Pancreas (tissue), 10 donors: ENCODE measurements at regions of chr19 and their contacts with region 1.

Region 1: DNA sequence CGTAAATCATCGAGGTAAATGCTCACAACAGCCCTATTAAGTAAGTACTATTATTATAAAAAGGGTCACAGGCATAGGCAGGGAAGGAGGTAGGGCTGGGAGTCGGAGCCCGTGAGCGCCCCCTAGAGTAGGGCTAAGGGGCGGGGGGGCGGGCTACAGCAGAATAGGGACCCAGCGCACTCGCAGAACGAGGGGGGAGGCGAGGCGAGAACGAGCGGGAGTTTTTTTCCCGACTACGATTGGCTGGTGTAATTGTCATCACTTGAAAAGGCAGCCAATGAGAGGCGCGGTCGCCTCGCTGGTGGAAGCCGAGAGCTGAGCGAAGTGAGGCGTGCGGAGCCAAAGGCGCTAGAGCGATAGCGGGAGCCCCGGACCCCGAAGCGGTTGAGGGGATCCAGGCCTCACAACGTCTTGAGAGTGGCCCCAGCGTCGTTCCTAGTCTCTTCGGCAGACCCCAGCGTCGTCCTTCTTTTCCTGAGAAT is 24.2 kb downstream of the KEAP1 start:
- DNase-seq: peak; percentile 91 to 93 (median 92)
- ATAC-seq: peak; percentile 91 to 95 (median 94)
- H3K4me3 ChIP-seq: peak overlapping the region in 2 of 4 donors; percentile 30 to 43
- H3K27ac ChIP-seq: no peak overlapping the region
- H3K4me1 ChIP-seq: no peaks in the 10 kb centered on the region
- H3K27me3 ChIP-seq: no peaks in the 10 kb centered on the region
- CTCF ChIP-seq: peak; percentile 65 to 75 (median 74)

Region 2: DNA sequence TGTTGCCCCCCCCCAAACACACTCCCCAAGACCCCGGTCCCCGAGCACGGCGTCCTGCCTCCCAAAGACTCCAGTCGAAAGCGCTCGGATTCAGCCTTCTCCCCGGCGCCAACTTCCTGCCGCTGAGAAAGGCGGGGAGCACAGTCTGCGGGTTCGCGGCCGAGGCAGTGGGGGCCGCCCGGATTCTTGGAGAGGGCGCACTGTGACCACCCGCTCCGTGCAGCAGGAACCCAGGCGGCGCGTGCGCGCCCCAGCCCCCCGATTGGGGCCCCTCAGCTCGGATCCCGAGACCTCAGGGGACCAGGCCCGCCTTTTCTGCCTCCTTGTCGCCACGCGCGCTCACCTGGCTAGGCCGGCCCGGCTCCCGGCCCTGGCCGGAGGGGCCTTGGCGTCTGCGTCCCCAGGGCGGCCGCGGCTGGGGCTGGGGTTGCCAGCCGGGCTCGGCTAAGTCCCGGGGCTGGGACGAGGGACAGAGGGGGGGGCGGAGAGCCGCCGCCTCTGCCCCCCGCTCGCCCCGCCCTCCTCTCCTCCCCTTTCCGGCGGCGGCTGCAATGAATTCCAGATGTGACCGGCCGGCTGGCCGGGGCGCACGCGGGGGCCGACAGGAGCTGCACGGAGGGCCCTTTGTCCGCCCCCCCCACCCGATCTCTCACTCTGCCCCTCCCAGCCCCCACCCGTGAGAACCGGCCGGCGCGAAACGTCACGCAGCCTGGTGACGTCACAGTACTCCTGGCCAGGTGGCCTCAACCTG is 247.9 kb before region 1 on chr19 and contains the start of gene S1PR2:
- intact Hi-C with region 1: no loop called
- DNase-seq: peak; percentile 65 to 84 (median 76)
- ATAC-seq: peak; percentile 87 to 89 (median 88)
- H3K4me3 ChIP-seq: peak within 1 kb of the TSS; percentile 82 to 95 (median 88)
- H3K27ac ChIP-seq: peak within 1 kb of the TSS; percentile 49 to 69 (median 58)
- H3K4me1 ChIP-seq: no peaks in the 10 kb centered on the region
- H3K27me3 ChIP-seq: no peaks in the 10 kb centered on the region
- CTCF ChIP-seq: no peak
- total RNA-seq, gene S1PR2: 1.9 to 4.8 (median 3.0) TPM

Region 3: DNA sequence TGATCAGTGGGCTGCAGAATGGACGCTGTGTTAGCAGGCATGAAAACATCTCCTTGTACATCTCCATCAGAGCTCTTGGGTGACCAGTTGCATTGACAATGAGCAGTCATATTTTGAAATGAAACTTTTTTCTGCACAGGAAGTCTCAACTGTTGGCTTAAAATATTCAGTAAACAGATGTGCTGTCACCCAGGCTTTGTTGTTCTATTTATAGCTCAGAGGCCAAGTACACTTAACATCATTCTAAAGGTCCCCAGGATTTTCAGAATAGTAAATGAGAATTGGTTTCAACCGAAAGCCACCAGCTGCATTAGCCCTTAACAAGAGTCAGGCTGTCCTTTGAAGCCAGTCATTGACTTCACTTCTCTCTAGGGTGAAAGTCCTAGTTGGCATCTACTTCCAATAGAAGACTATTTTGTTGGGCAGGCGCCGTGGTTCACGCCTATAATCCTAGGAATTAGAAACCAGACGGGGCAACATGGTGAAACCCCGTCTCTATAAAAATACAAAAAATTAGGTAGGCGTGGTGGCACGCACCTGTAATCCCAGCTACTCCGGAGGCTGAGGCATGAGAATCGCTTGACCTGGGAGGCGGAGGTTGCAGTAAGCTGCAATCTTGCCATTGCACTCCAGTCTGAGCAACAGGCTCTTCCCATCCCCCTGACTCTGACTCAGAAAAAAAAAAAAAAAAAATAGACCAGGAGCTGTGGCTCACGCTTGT is 66.5 kb before region 1 on chr19:
- intact Hi-C with region 1: no loop called
- DNase-seq: no peak
- ATAC-seq: no peak
- H3K4me3 ChIP-seq: no peak overlapping the region
- H3K27ac ChIP-seq: no peak overlapping the region
- H3K4me1 ChIP-seq: peaks cover 0 to 5% (median 4%) of the 10 kb centered on the region in 3 donors
- H3K27me3 ChIP-seq: no peaks in the 10 kb centered on the region
- CTCF ChIP-seq: no peak

Region 4: DNA sequence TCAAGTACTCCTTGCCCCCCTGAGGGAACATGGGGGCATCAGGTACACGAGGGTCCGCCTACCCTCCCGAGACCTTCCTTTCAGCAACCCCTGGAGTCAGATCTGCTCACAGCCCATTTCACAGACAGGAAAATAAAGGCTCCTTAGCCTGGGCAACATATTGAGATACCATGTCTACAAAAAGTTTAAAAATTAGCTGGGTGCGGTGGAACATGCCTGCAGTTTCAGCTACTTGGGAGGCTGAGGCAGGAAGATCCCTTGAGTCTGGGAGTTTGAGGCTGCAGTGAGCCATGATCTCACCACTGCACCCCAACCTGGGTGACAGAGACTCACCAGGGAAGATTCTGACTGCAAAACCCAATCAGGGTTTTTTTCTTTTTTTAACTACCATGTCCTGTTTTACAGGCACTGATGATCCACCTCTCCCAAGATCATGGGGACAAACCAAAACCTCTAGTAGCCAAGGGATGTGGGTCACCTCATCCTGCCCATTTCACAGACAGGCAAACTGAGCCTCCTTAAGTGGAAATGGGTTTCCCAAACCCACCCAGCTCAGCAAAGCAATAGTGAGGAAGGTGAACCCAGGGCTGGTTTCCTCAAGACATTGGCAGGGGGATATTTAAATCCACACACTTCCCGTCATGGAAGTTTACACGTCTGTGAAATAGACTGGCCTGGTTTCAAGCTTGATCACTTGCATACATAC is 96.2 kb after region 1 on chr19:
- intact Hi-C with region 1: loop called in 1 of 3 experiments (anchors 5 kb)
- DNase-seq: no peak
- ATAC-seq: no peak
- H3K4me3 ChIP-seq: no peak overlapping the region
- H3K27ac ChIP-seq: no peak overlapping the region
- H3K4me1 ChIP-seq: no peaks in the 10 kb centered on the region
- H3K27me3 ChIP-seq: no peaks in the 10 kb centered on the region
- CTCF ChIP-seq: no peak